K562 (cell line): ENCODE measurements at regions of chr6 and their contacts with region 1.

Region 1: GRCh38 chr6:70369332-70369950 is 43.9 kb upstream of the FAM135A start:
- DNase-seq: peak; percentile 76 to 84 (median 77)
- ATAC-seq: peak; percentile 93
- H3K4me3 ChIP-seq: no peak overlapping the region
- H3K27ac ChIP-seq: no peak overlapping the region
- H3K4me1 ChIP-seq: peaks cover 0 to 2% of the 10 kb centered on the region in 2 experiments; a peak in 1 of 5 replicates
- H3K27me3 ChIP-seq: peaks cover 6% of the 10 kb centered on the region in 2 experiments; a peak in 2 of 5 replicates
- CTCF ChIP-seq: peak; percentile 94 to 98 (median 94)
- EP300 ChIP-seq: no peak
- POLR2A ChIP-seq: no peak
- RAD21 ChIP-seq: peak; percentile 96 to 98

Region 2: DNA sequence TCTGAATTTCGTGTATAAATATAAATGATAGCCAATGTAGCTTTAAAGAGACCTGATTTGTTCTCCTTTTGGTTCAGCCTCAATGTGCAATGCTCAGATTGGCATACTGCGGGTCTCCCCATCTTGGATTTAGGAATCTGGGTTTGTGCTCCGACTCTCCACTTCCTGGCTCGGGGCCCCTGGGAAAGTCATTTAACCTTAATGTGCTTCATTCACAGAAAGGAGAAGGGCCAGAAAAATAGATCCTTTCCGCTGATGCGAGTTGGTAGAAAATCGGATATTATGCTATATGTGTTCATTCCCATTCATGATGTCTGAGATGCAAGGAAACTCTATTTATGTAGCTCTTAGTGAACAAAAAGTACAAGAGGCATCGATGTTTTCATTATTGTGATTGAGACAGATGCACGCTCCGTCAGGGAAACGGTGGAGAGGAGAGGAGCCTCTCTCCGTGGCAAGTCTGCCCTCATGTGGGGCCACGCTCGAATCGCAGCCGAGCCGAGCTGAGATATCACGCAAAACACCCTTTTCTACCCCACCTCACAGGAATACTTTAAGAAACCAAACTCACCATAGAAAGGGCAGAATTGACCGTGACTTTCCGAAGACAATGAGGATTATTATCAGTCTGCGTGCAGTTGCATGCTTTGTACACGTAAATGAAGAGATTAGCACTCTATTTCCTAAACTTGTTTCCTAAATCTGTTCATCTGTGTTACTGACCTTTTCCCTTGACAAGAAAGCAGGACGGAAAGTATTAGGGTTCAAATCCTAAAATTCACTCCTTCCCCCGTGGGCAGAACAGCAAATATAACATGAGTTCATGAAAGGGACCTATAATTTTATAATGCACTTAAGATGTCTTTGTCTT is 203.1 kb before region 1 on chr6:
- CTCF ChIA-PET with region 1: no interaction called
- POLR2A ChIA-PET with region 1: no interaction called
- in situ Hi-C with region 1: no loop called
- intact Hi-C with region 1: no loop called
- DNase-seq: peak; percentile 59 to 78 (median 69)
- ATAC-seq: peak; percentile 84
- H3K4me3 ChIP-seq: no peak overlapping the region
- H3K27ac ChIP-seq: no peak overlapping the region
- H3K4me1 ChIP-seq: peaks cover 5 to 27% of the 10 kb centered on the region in 2 experiments
- H3K27me3 ChIP-seq: no peaks in the 10 kb centered on the region; a peak in 2 of 5 replicates
- CTCF ChIP-seq: peak; percentile 78 to 92 (median 86)
- EP300 ChIP-seq: no peak
- POLR2A ChIP-seq: no peak
- RAD21 ChIP-seq: peak; percentile 77 to 87

Region 3: DNA sequence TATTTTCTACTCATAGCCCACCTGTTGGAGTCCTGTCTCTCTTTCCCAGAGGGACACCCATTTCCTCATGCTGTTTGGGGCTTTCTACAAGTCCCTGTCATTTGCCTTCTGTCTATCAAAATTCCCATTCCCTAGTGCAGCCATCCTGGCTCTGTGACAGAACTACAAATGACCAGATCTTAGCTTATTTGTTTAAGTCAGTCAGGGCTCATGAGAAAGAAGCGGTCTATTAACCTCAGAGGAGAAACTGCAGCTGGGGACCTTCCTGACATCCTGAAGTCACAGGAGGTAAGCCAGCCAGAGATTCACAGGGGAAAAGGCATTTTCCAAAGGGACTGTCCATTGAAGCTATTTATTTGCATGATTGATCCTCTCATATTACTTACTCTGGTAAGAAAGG is 64.8 kb before region 1 on chr6:
- CTCF ChIA-PET with region 1: interaction called, 77 read pairs
- POLR2A ChIA-PET with region 1: interaction called, 6 read pairs
- in situ Hi-C with region 1: loop called (anchors 5 kb)
- intact Hi-C with region 1: no loop called
- DNase-seq: no peak
- ATAC-seq: no peak
- H3K4me3 ChIP-seq: no peak overlapping the region
- H3K27ac ChIP-seq: no peak overlapping the region
- H3K4me1 ChIP-seq: no peaks in the 10 kb centered on the region
- H3K27me3 ChIP-seq: peaks cover 12 to 21% of the 10 kb centered on the region in 2 experiments; a peak in 4 of 5 replicates
- CTCF ChIP-seq: no peak
- EP300 ChIP-seq: no peak
- POLR2A ChIP-seq: no peak
- RAD21 ChIP-seq: no peak

Region 4: GRCh38 chr6:70310063-70310694 is 59.3 kb before region 1 on chr6:
- CTCF ChIA-PET with region 1: interaction called, 77 read pairs
- POLR2A ChIA-PET with region 1: interaction called, 6 read pairs
- in situ Hi-C with region 1: loop called (anchors 5 kb)
- intact Hi-C with region 1: loop called (anchors 1 kb)
- DNase-seq: peak in 3 of 4 experiments; percentile 14 to 66 (median 20)
- ATAC-seq: peak; percentile 73
- H3K4me3 ChIP-seq: no peak overlapping the region
- H3K27ac ChIP-seq: no peak overlapping the region
- H3K4me1 ChIP-seq: no peaks in the 10 kb centered on the region; a peak in 1 of 5 replicates
- H3K27me3 ChIP-seq: peaks cover 0 to 8% of the 10 kb centered on the region in 2 experiments; a peak in 2 of 5 replicates
- CTCF ChIP-seq: peak; percentile 54 to 90 (median 70); a peak in 5 of 6 replicates
- EP300 ChIP-seq: no peak
- POLR2A ChIP-seq: no peak
- RAD21 ChIP-seq: peak; percentile 93 to 97

Region 5: GRCh38 chr6:71012866-71013469 is 643.5 kb after region 1 on chr6:
- CTCF ChIA-PET with region 1: interaction called, 3 read pairs
- POLR2A ChIA-PET with region 1: no interaction called
- in situ Hi-C with region 1: no loop called
- intact Hi-C with region 1: loop called (anchors 2 kb)
- DNase-seq: peak; percentile 57 to 70 (median 64)
- ATAC-seq: peak; percentile 93
- H3K4me3 ChIP-seq: no peak overlapping the region
- H3K27ac ChIP-seq: no peak overlapping the region
- H3K4me1 ChIP-seq: no peaks in the 10 kb centered on the region
- H3K27me3 ChIP-seq: no peaks in the 10 kb centered on the region
- CTCF ChIP-seq: peak; percentile 64 to 76 (median 71)
- EP300 ChIP-seq: no peak
- POLR2A ChIP-seq: no peak
- RAD21 ChIP-seq: peak; percentile 72 to 83